Activated CD4-positive, alpha-beta T cell treated with anti-CD3 and anti-CD28 coated beads for 36 hours (primary cell): ENCODE measurements at regions of chr12 and their contacts with region 1.

Region 1: GRCh38 chr12:130871286-130872178 is at the start of gene RAN:
- DNase-seq: peak; percentile 96
- ATAC-seq: peak; percentile 73
- H3K4me3 Mint-ChIP-seq: peak within 1 kb of the TSS; percentile 99
- H3K27ac Mint-ChIP-seq: peak within 1 kb of the TSS; percentile 100
- H3K4me1 Mint-ChIP-seq: peaks cover 56% of the 10 kb centered on the region
- H3K27me3 Mint-ChIP-seq: no peaks in the 10 kb centered on the region
- total RNA-seq, gene RAN: 1,919 to 2,242 TPM

Region 2: GRCh38 chr12:130796985-130797686 is 74.4 kb before region 1 on chr12:
- CTCF ChIA-PET with region 1: interaction called, 4 read pairs
- POLR2A ChIA-PET with region 1: no interaction called
- intact Hi-C with region 1: loop called in 1 of 2 experiments (anchors 2 kb)
- DNase-seq: peak; percentile 76
- ATAC-seq: peak; percentile 96
- H3K4me3 Mint-ChIP-seq: peak overlapping the region; percentile 49
- H3K27ac Mint-ChIP-seq: peak overlapping the region; percentile 88
- H3K4me1 Mint-ChIP-seq: peaks cover 19% of the 10 kb centered on the region
- H3K27me3 Mint-ChIP-seq: no peaks in the 10 kb centered on the region

Region 3: GRCh38 chr12:130933269-130933995 is 61.9 kb after region 1 on chr12:
- CTCF ChIA-PET with region 1: no interaction called
- POLR2A ChIA-PET with region 1: no interaction called
- intact Hi-C with region 1: no loop called
- DNase-seq: no peak
- ATAC-seq: no peak
- H3K4me3 Mint-ChIP-seq: no peak overlapping the region
- H3K27ac Mint-ChIP-seq: no peak overlapping the region
- H3K4me1 Mint-ChIP-seq: no peaks in the 10 kb centered on the region
- H3K27me3 Mint-ChIP-seq: peaks cover 32% of the 10 kb centered on the region

Region 4: DNA sequence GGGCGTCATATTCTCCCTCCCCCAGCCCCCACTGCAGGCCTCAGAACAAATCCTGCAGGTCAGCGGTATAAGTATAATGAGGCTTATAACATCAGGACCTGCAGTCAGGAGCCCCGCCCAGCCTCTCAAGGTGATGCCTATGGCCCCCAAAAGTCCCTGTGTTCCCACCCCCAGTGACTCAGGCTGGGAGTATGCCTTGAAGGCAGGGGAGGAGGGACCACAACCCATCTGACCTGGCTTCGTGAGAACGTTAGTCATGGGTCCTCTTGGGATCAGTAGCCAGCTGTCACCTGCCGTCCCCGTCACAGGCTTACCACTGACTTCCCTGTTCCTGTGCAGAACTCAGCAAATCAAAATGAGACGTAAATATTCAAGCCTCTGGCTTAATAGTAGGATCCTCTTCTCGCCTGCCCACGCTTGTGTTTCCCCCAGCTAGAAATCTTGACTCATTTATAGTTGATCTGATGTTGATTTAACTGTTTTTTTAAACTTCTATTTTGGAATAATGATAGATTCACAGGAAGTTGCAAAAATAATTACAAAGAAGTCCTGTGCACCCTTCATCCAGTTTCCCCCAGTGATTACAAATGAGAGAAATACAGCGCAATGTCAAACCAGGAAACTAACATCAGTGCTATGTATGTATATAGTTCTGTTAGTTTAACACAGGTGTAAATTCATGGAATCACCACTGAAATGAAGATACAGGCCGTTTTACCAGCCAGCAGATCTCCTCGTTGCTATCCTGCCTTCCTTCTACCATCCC is 189.7 kb after region 1 on chr12:
- CTCF ChIA-PET with region 1: no interaction called
- POLR2A ChIA-PET with region 1: no interaction called
- intact Hi-C with region 1: no loop called
- DNase-seq: no peak
- ATAC-seq: peak; percentile 33
- H3K4me3 Mint-ChIP-seq: no peak overlapping the region
- H3K27ac Mint-ChIP-seq: no peak overlapping the region
- H3K4me1 Mint-ChIP-seq: no peaks in the 10 kb centered on the region
- H3K27me3 Mint-ChIP-seq: peaks cover 23% of the 10 kb centered on the region

Region 5: DNA sequence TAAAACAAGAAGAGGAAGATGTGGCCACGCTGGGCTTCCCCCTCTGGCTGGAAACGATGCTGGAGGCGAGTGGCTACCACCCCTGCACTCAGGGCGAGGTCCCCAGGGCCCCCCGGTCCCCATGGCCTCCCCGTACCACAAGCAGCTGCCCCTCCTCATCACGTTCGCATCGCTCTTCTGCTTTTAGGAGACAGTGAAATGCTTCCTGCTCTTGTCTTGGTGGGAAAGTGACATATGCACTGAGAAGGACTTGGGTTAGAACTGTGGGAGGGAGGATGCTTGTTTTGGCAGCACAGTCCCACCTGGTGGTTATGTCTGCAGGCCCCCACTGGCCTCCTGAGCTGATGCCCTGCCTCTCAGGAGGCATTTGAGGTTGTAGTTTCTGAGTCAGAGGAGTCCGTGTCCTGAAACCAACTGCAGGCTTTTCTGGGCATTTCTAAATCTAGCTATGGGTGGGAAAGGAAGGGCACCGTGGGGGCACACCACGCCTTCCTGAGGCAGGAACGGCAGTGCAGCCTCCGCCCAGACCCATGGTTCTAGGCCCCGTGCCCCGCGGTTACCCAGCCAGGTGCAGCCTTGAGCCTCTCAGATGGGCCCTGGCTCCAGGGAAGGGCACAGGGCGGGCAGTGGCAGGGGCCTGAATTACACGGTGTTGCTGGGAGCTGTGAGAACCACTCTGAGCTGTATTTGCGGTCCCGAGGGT is 221.5 kb after region 1 on chr12:
- CTCF ChIA-PET with region 1: no interaction called
- POLR2A ChIA-PET with region 1: no interaction called
- intact Hi-C with region 1: loop called in 1 of 2 experiments (anchors 2 kb)
- DNase-seq: peak; percentile 70
- ATAC-seq: peak; percentile 70
- H3K4me3 Mint-ChIP-seq: peak overlapping the region; percentile 45
- H3K27ac Mint-ChIP-seq: peak overlapping the region; percentile 59
- H3K4me1 Mint-ChIP-seq: peaks cover 21% of the 10 kb centered on the region
- H3K27me3 Mint-ChIP-seq: peaks cover 3% of the 10 kb centered on the region

Region 6: GRCh38 chr12:131894313-131894860 is 1022.9 kb after region 1 on chr12 and contains the start of gene ULK1:
- CTCF ChIA-PET with region 1: no interaction called
- POLR2A ChIA-PET with region 1: no interaction called
- intact Hi-C with region 1: loop called in 1 of 2 experiments (anchors 1 kb)
- DNase-seq: peak; percentile 96
- ATAC-seq: peak; percentile 86
- H3K4me3 Mint-ChIP-seq: peak within 1 kb of the TSS; percentile 78
- H3K27ac Mint-ChIP-seq: peak within 1 kb of the TSS; percentile 55
- H3K4me1 Mint-ChIP-seq: peaks cover 12% of the 10 kb centered on the region
- H3K27me3 Mint-ChIP-seq: no peaks in the 10 kb centered on the region
- total RNA-seq, gene ULK1: 12.9 to 14.4 TPM

Region 7: DNA sequence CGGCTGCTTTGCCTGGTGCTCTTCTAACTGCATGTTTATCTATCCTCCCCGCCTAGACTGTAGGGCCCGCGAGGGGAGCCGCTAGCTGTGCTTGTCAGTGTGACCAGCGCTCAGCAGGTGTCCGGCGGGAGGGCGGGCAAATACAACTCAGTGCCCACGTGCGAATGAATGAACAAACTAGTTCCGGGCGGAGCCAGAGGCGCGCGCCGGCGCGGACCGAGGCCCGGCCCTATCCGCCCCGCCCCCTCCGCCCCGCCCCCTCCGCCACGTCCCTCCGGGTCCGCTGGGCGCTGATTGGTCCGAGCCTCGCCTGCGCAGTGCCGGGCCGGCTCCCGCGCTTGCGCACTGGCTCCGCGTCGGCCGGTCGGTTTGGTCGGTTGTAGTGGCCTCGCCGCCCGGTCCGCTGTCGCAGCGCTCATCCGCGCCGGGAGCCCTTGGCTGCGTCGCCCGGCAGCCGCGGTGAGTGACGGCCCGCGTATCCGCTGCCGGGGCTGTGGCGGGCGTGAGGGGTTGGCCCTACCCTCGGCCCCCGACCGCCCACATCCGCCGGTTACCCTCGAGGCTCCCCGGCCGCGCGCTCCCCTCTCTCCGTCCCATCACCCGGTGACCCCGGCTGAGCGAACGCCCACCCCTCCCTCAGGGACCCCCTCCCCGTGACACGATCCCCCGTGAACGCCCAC is 1212.5 kb after region 1 on chr12:
- CTCF ChIA-PET with region 1: no interaction called
- POLR2A ChIA-PET with region 1: no interaction called
- intact Hi-C with region 1: loop called in 1 of 2 experiments (anchors 10 kb)
- DNase-seq: peak; percentile 94
- ATAC-seq: peak; percentile 95
- H3K4me3 Mint-ChIP-seq: peak overlapping the region; percentile 86
- H3K27ac Mint-ChIP-seq: peak overlapping the region; percentile 91
- H3K4me1 Mint-ChIP-seq: peaks cover 23% of the 10 kb centered on the region
- H3K27me3 Mint-ChIP-seq: no peaks in the 10 kb centered on the region

Region 8: DNA sequence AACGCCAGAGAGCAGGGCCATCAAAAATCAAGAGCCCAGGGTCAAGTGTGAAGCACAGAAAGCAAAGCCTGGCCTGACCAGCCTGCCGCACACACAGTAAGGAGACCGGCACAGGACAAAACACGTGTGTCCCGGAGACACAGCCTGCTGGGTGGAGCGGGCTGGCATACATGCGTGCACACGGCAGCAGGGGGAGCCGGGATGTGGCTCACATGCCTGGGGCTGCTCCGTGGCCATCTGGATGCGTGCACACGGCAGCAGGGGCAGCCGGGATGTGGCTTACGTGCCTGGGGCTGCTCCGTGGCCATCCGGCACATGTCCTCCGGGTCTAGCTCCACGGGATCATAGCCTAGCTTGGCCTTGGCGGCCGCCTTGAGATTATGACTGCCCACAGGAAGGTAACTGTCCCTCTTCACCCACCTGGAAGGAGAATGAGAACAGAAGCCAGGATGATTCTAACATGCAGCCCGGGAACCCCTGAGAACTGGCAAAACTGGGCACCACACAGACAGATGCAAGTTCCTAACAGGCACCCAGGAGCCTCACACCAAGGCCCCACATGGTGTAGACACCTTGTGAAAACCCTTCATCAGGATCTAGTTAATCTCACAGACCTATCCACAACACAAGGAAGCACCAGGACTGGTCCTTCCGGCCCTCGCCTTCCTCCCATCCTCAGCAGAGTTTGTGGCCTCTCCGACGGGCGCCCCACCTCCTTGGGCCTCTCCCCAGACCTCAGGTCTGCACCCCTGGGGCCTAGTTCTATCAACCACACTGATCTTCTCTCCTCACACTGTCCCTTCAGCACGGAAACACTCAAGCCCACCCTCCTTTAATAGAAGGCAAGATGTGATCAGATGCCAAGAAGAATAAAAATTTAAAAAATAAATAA is 1802.0 kb after region 1 on chr12:
- CTCF ChIA-PET with region 1: no interaction called
- POLR2A ChIA-PET with region 1: no interaction called
- intact Hi-C with region 1: no loop called
- DNase-seq: no peak
- ATAC-seq: no peak
- H3K4me3 Mint-ChIP-seq: no peak overlapping the region
- H3K27ac Mint-ChIP-seq: no peak overlapping the region
- H3K4me1 Mint-ChIP-seq: no peaks in the 10 kb centered on the region
- H3K27me3 Mint-ChIP-seq: no peaks in the 10 kb centered on the region